WTC11 (cell line): ENCODE measurements at regions of chr20 and their contacts with region 1.

Region 1: GRCh38 chr20:17682103-17682888 is at the start of gene RRBP1:
- DNase-seq: peak; percentile 99
- ATAC-seq: peak; percentile 96
- H3K4me3 Mint-ChIP-seq: peak within 1 kb of the TSS; percentile 80
- H3K27ac Mint-ChIP-seq: peak within 1 kb of the TSS; percentile 97
- H3K4me1 Mint-ChIP-seq: peaks cover 37% of the 10 kb centered on the region
- H3K27me3 Mint-ChIP-seq: peaks cover 11% of the 10 kb centered on the region
- CTCF ChIP-seq: peak; percentile 72
- total RNA-seq, gene RRBP1: 161 to 171 TPM (median 162 TPM) in 3 replicates

Region 2: DNA sequence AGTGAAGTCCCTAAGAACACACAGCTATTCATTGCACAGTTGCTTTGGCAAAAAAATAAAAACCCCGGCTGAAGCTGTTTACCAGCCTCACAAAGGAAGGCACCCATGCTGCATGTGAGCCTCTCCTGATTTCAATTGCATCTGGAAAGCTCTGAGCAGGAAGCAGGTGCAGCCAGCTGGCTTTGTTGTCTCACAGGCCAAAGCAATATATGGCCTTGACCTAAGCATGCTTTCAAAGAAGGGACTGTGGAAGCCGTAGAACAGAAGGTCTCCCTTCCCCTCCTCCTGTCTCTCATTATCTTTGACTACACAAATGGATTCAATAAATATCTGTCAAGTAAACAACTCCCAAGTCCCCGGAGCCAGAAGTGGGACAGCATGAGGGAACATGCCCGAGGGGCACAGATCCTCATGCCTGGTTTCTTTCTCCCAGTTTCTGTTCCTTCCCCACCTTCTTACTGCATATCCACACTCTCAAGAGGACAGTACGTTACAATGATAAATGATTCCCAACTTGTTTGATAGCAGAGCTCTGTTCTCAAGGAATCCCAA is 512.6 kb before region 1 on chr20:
- CTCF ChIA-PET with region 1: no interaction called
- POLR2A ChIA-PET with region 1: no interaction called
- DNase-seq: no peak
- ATAC-seq: no peak
- H3K4me3 Mint-ChIP-seq: no peak overlapping the region
- H3K27ac Mint-ChIP-seq: no peak overlapping the region
- H3K4me1 Mint-ChIP-seq: peaks cover 5% of the 10 kb centered on the region
- H3K27me3 Mint-ChIP-seq: no peaks in the 10 kb centered on the region; the same call in 1 of the 2 replicates
- CTCF ChIP-seq: no peak

Region 3: GRCh38 chr20:17569616-17570346 is 112.5 kb before region 1 on chr20 and contains the start of gene DSTN:
- CTCF ChIA-PET with region 1: interaction called, 5 read pairs
- POLR2A ChIA-PET with region 1: interaction called, 10 read pairs
- DNase-seq: peak; percentile 97
- ATAC-seq: peak; percentile 93
- H3K4me3 Mint-ChIP-seq: peak within 1 kb of the TSS; percentile 88
- H3K27ac Mint-ChIP-seq: peak within 1 kb of the TSS; percentile 94
- H3K4me1 Mint-ChIP-seq: peaks cover 50% of the 10 kb centered on the region
- H3K27me3 Mint-ChIP-seq: no peaks in the 10 kb centered on the region
- CTCF ChIP-seq: no peak
- total RNA-seq, gene DSTN: 145 to 153 TPM (median 149 TPM) in 3 replicates

Region 4: DNA sequence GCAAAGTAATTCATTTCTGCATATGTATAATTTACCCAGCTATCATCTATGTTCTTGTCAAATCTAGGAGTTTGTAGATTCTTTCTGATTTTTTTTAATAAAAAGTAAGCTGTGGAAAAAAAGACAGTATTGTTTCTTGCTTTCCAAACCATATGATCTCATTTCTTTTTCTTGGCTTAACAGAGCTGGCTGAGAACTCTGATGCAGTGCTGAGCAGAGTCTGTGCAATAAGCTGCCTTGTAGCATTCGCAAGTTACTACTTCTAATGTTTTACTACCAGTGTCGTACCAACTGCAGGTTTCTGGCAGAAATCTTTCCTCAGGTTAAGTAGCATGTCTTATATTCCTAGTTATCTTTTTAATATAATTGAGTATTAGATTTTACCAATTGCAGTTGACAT is 15.8 kb before region 1 on chr20:
- CTCF ChIA-PET with region 1: interaction called, 21 read pairs
- POLR2A ChIA-PET with region 1: interaction called, 4 read pairs
- DNase-seq: no peak
- ATAC-seq: no peak
- H3K4me3 Mint-ChIP-seq: no peak overlapping the region
- H3K27ac Mint-ChIP-seq: no peak overlapping the region
- H3K4me1 Mint-ChIP-seq: peaks cover 82% of the 10 kb centered on the region
- H3K27me3 Mint-ChIP-seq: no peaks in the 10 kb centered on the region
- CTCF ChIP-seq: no peak

Region 5: GRCh38 chr20:17747431-17747867 is 65.2 kb after region 1 on chr20:
- CTCF ChIA-PET with region 1: interaction called, 23 read pairs
- POLR2A ChIA-PET with region 1: no interaction called
- DNase-seq: no peak
- ATAC-seq: no peak
- H3K4me3 Mint-ChIP-seq: no peak overlapping the region
- H3K27ac Mint-ChIP-seq: no peak overlapping the region
- H3K4me1 Mint-ChIP-seq: peaks cover 53% of the 10 kb centered on the region
- H3K27me3 Mint-ChIP-seq: no peaks in the 10 kb centered on the region; the same call in 1 of the 2 replicates
- CTCF ChIP-seq: no peak

Region 6: DNA sequence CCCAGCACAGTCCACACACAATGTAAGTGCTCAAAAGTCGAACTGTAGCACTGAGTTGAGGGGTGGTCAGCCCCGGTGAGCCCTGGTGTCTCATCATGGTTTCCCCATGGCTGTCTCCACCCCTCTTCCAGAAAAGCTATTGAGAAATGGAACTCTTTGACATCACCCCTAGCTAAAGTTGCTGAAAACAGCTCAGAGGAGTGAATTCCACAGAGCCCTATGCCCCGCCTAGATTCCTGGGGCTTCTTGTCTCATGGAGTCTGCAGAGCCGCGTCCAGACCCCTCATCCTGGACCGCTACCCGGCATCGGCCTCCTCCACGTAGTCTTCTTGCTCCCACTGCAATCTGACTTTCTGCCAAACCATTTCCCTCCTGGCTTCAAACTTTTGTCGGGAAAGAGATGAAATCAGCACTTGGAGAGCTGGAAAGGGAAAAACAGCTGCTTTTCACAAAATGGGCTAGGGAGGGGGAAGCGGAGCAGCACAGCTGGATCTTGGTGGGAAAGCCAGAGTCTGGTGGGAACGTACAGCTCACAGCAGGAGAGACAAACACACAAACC is 154.1 kb after region 1 on chr20:
- CTCF ChIA-PET with region 1: interaction called, 11 read pairs
- POLR2A ChIA-PET with region 1: no interaction called
- DNase-seq: no peak
- ATAC-seq: 0 out of 2 replicates have a peak, but pooled peaks have one; percentile 16
- H3K4me3 Mint-ChIP-seq: no peak overlapping the region
- H3K27ac Mint-ChIP-seq: no peak overlapping the region
- H3K4me1 Mint-ChIP-seq: peaks cover 30% of the 10 kb centered on the region
- H3K27me3 Mint-ChIP-seq: no peaks in the 10 kb centered on the region
- CTCF ChIP-seq: no peak

Region 7: GRCh38 chr20:17885544-17885943 is 203.2 kb after region 1 on chr20:
- CTCF ChIA-PET with region 1: interaction called, 19 read pairs
- POLR2A ChIA-PET with region 1: no interaction called
- DNase-seq: no peak
- ATAC-seq: no peak
- H3K4me3 Mint-ChIP-seq: no peak overlapping the region
- H3K27ac Mint-ChIP-seq: no peak overlapping the region
- H3K4me1 Mint-ChIP-seq: peaks cover 19% of the 10 kb centered on the region
- H3K27me3 Mint-ChIP-seq: no peaks in the 10 kb centered on the region; the same call in 1 of the 2 replicates
- CTCF ChIP-seq: no peak